ENCODE measurements at regions of chr4 and their contacts with region 1.

Region 1: DNA sequence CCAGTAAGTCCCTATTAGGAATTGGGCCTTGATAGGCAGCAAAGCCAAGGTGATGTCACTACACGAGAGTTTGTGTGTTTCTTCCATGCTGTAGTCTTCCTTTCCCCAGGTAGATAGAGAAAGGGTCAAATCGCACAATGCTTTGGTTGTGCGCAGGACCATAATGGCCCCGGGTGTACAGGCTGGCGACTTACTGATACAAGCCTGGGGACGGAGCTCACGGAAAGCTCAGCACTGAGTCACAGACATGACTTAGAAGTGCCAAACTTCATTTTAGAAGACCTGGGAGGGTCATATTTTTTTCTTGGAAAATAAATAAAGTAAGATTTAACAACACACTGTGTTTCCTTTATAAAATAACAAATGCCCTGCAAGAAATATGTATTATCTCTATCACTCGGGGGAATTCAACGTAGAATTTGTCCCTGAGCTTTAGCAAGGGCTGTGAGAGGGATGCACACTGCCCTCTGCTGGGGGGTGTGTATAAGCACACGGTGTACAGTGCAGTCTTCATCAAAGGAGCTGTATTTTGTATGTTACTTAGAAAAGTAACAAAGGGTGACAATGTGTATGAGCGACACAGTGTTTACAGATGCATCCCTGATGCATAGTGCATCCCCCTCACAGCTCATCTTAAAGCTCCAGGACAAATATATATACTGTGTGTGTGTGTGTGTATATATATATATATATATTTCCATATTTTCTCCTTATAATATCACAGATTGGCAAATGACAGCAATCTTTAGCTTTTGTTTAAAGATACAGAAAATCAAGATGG is 254.5 kb upstream of the VEGFC start:
- DNase-seq: peak; percentile 16
- H3K4me3 ChIP-seq: no peak overlapping the region
- CTCF ChIP-seq: peak; percentile 66

Region 2: GRCh38 chr4:176377780-176378179 is 669.5 kb before region 1 on chr4:
- CTCF ChIA-PET with region 1: interaction called, 52 read pairs
- POLR2A ChIA-PET with region 1: no interaction called
- DNase-seq: no peak
- H3K4me3 ChIP-seq: no peak overlapping the region
- CTCF ChIP-seq: peak; percentile 39

Region 3: DNA sequence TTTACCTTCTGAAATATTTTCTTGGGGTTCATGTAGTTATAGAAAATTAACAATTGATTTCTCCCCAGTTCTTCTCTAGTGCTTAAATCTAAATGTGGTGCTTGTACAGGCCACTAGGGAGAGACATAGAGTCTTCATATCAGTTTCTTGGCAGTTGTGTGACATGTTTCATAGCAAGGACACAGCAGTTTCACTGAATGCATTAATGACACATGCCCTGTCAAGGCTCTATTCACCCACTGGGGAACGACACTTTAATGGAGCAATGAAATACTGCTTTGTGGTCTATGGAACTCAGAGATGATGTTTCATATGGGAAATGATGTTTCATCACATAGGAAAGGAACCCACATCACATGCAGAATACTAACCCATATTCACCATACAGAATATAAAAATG is 257.3 kb before region 1 on chr4:
- CTCF ChIA-PET with region 1: interaction called, 52 read pairs
- POLR2A ChIA-PET with region 1: interaction called, 12 read pairs
- DNase-seq: no peak
- H3K4me3 ChIP-seq: peak overlapping the region; percentile 78
- CTCF ChIP-seq: peak; percentile 59

Region 4: GRCh38 chr4:176902710-176903323 is 144.4 kb before region 1 on chr4:
- CTCF ChIA-PET with region 1: interaction called, 12 read pairs
- POLR2A ChIA-PET with region 1: interaction called, 4 read pairs
- DNase-seq: peak; percentile 90
- H3K4me3 ChIP-seq: peak overlapping the region; percentile 16
- CTCF ChIP-seq: no peak

Region 5: DNA sequence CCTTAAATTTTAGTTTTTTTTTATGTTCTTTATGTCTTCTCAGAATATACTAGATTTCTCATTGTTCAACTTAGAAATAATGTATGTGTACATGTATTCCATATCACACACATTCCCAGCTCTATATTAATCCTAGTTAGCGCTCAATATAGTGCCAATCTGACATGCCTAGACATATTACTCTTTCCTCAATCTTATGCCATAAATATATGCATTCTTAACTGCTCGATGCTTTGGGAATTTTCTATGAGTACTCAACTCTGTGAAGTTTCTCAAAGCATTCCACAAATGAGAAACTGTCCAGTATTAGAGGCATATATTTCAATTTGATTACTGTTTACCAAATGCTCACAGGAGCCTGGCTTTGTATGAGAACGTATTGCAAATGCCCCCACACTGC is 23.3 kb before region 1 on chr4:
- CTCF ChIA-PET with region 1: interaction called, 24 read pairs
- POLR2A ChIA-PET with region 1: no interaction called
- DNase-seq: no peak
- H3K4me3 ChIP-seq: no peak overlapping the region
- CTCF ChIP-seq: no peak

Region 6: DNA sequence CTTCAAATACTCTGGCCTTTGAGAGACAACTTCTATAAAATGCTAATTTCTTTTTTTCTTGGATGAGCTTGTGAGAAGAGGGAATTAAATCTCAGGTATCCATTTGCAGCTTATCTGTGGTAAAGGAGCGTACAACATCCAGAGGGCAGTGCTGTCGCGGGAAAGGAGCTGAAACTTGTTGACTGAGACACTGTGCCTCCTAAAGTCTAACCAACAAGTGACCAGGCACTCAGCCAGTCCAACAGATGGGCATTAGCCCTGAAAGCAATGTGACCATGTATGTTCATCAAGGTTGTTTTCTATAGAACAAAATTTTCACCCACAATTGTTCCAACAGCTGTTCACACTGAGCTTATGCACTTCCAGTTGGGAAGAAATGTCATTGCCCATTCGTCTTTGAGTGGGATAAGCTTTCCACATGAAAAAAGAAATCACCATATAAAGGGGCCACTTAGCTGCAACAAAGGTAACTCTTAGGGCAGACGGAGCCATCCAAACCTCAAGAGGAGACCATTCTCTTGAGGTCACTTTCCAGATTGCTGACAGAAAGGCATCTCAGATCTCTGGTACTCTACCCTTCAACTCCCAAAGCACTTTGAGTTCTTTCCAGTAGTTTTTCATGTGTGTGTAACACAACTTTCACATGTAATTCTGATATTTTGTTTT is 17.6 kb after region 1 on chr4:
- CTCF ChIA-PET with region 1: interaction called, 26 read pairs
- POLR2A ChIA-PET with region 1: no interaction called
- DNase-seq: no peak
- H3K4me3 ChIP-seq: no peak overlapping the region
- CTCF ChIP-seq: no peak

Measured in AG04449 (cell line).